Naive thymus-derived CD4-positive, alpha-beta T cell (primary cell): ENCODE measurements at regions of chr6 and their contacts with region 1.

Region 1: DNA sequence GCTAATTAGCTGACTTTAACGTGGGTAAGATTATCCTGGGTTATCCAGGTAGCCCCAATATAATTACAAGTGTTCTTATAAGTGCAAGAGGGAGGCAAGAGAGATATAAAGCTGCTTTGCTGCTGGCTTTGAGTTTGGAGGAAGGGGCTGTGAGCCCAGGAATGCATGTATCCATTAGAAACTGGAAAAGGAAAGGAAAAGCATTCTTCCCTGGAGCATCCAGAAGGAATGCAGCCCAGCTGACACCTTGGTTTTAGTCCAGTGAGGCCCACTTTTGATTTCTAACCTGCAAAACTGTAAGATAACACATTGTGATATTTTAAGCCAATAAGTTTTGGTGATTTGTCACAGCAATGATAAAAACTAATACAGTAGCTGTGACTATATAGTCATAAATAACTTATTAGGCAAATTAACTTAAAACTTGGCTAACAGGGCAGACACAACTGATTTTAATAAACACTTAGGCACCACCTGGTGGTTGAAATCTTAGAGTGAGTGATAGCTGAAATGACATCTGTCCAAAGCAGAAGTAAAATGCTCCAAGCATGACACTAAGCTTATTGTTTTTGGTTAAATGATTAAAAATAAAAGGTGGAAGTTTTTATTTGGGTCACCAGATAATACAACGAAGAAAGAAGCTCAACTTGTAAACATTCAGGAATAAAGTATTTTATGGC is 35.6 kb downstream of the ADGRF4 start:
- DNase-seq: peak in 3 of 9 donors; percentile 7 to 13 (median 7)
- ATAC-seq: no peak
- H3K4me3 ChIP-seq: no peak overlapping the region
- H3K4me3 Mint-ChIP-seq: no peak overlapping the region
- H3K27ac ChIP-seq: no peak overlapping the region
- H3K27ac Mint-ChIP-seq: no peak overlapping the region
- H3K4me1 ChIP-seq: peaks cover 0 to 4% of the 10 kb centered on the region in 2 donors
- H3K4me1 Mint-ChIP-seq: peaks cover 0 to 2% (median 0%) of the 10 kb centered on the region in 7 donors
- H3K27me3 ChIP-seq: peaks cover 0 to 4% of the 10 kb centered on the region in 2 donors
- H3K27me3 Mint-ChIP-seq: peaks cover 0 to 11% (median 4%) of the 10 kb centered on the region in 5 donors

Region 2: DNA sequence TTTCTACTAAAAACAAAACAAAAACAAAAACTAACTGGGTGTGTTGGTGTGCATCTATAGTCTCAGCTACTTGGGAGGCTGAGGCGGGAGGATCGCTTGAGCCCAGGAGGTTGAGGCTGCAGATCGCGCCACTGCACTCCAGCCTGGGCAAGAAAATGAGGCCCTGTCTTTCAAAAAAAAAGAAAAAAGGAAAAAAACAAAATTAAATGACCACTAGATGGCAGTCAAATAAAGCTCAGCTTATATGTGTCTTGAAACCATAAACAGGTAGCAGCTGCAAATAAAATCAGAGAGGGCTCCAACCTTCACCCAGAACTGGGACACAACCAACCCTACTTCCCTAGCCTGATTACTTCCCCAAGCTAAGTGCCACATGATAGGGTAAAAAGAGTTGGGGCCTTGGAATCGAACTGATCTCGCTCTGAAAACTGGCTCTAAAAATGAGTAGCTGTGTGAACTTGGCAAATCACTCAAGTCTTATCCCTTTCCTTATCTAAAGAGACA is 102.7 kb before region 1 on chr6:
- CTCF ChIA-PET with region 1: interaction called, 6 read pairs
- POLR2A ChIA-PET with region 1: no interaction called
- intact Hi-C with region 1: loop called (anchors 1 kb)
- DNase-seq: peak in 6 of 9 donors; percentile 20 to 60 (median 53)
- ATAC-seq: peak; percentile 64
- H3K4me3 ChIP-seq: no peak overlapping the region
- H3K4me3 Mint-ChIP-seq: no peak overlapping the region
- H3K27ac ChIP-seq: no peak overlapping the region
- H3K27ac Mint-ChIP-seq: peak overlapping the region in 8 of 9 donors; percentile 10 to 75 (median 48)
- H3K4me1 ChIP-seq: peaks cover 6 to 9% of the 10 kb centered on the region in 2 donors
- H3K4me1 Mint-ChIP-seq: peaks cover 7 to 28% (median 20%) of the 10 kb centered on the region in 7 donors
- H3K27me3 ChIP-seq: no peaks in the 10 kb centered on the region
- H3K27me3 Mint-ChIP-seq: no peaks in the 10 kb centered on the region

Region 3: DNA sequence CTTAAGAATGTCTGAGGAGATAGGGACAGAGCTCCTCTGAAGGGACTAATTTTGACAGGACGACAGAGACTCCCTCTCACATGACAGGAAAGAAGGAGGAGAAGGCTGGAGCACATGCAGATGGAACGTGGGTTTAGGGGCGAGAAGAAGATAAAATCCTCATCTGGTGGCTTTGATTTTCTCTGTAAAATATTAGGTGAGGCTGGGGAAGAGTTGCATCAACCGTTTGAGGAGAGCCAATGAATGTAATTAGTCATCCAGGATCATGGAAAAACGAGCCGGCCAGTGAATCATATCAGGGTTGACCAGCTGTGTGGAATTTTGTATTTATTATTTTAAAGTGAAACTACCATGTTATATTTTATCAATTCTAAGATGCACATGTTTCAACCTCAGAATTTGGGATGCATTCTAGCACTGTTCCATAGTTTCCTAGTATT is 82.5 kb before region 1 on chr6:
- CTCF ChIA-PET with region 1: no interaction called
- POLR2A ChIA-PET with region 1: no interaction called
- intact Hi-C with region 1: loop called in 1 of 2 experiments (anchors 5 kb)
- DNase-seq: no peak
- ATAC-seq: no peak
- H3K4me3 ChIP-seq: no peak overlapping the region
- H3K4me3 Mint-ChIP-seq: no peak overlapping the region
- H3K27ac ChIP-seq: no peak overlapping the region
- H3K27ac Mint-ChIP-seq: no peak overlapping the region
- H3K4me1 ChIP-seq: no peaks in the 10 kb centered on the region
- H3K4me1 Mint-ChIP-seq: peaks cover 0 to 11% (median 0%) of the 10 kb centered on the region in 7 donors
- H3K27me3 ChIP-seq: no peaks in the 10 kb centered on the region
- H3K27me3 Mint-ChIP-seq: peaks cover 0 to 6% (median 0%) of the 10 kb centered on the region in 5 donors